ENCODE measurements at regions of chr2 and their contacts with region 1.

Region 1: DNA sequence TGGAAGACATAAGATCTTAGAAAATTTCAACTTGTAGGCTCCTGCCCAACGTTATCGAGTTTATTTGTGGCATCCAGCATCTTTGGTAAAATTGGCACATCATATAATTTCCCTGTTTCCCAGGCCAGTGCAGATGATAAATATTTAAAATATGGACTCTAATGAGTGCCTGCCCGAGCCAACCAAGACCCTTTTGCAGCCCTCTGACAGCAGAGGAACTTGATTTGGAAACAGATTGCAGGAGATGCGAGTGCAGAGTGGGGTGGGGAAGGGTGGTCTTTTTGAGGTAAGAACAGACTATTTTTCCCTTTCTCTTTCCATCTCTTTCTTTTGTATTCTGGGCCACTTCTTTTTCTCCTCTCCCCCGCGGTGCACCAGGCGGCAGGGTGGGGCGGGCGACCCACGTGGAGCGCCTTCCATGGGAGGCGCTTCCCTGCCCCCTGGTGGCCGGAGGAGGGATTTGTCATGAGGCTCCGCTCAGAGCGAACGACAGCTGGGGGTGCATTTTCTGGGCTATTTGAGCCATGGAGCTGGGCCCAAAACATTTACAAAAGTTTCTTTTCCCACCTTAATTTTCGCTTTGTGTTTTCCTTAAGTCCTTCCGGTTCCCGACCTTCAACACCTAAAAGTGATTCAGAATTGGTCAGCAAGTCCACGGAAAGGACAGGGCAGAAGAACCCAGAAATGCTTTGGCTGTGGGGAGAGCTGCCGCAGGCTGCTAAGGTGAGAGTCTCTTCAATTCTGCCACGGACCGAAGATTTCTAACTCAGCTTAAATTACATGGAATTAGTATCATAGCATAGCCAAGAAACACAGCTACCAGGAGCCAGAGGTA is 32.7 kb downstream of the LPIN1 start:
- DNase-seq: peak; percentile 93
- ATAC-seq: peak; percentile 92
- H3K4me3 Mint-ChIP-seq: peak overlapping the region; percentile 49
- H3K27ac Mint-ChIP-seq: peak overlapping the region; percentile 75
- H3K4me1 Mint-ChIP-seq: peaks cover 41% of the 10 kb centered on the region
- H3K27me3 Mint-ChIP-seq: no peaks in the 10 kb centered on the region

Region 2: DNA sequence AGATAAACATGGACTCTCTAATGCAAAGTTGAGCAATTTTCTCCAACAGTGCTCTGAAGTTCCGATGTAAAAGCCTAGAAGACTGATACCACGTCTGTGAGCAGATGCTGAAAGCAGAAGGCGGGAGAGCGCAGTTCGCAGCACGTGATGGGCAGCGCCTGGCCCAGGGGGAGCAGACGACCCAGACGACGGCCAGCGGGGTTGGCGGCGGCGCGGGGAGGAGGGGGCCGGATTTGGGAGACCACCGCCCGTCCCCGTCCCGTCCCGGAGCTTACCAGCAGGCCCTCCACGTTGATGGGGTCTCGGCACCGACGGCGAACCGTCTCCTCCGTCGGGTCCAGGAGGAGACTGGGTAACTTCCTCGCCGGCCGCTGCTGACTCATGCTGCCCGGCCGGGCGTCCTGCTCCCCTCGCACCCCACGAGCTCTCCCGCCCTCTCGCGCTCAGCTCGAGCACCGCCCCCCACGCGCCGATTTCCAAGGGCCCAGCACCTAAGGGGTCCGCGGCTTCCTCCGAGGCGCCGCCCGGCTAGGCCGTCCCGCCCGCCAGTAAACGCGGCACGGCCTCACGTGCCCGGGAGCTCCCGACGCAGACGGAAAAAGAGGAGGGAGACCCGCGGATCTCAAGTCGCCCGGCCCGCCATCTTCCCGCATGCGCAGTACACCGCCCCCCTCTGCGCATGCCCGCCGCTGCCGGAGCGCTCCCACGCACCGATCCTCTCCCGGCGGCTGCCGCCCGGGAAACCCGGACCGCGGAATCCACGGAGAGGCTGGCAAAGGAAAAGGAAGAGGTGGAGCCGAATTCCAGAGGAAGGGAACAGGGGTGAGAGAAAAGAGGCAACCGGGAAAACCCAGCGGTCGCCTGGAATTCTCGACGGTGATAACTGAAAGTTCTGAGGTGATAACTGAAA is 313.4 kb before region 1 on chr2 and contains the start of gene E2F6:
- CTCF ChIA-PET with region 1: no interaction called
- POLR2A ChIA-PET with region 1: interaction called, 6 read pairs
- intact Hi-C with region 1: loop called in 1 of 2 experiments (anchors 5 kb)
- DNase-seq: peak; percentile 92
- ATAC-seq: peak; percentile 85
- H3K4me3 Mint-ChIP-seq: peak within 1 kb of the TSS; percentile 81
- H3K27ac Mint-ChIP-seq: peak within 1 kb of the TSS; percentile 92
- H3K4me1 Mint-ChIP-seq: peaks cover 33% of the 10 kb centered on the region
- H3K27me3 Mint-ChIP-seq: no peaks in the 10 kb centered on the region
- total RNA-seq, gene E2F6: 7.2 to 10.6 TPM

Region 3: GRCh38 chr2:11738589-11739436 is 40.3 kb before region 1 on chr2:
- CTCF ChIA-PET with region 1: interaction called, 28 read pairs
- POLR2A ChIA-PET with region 1: interaction called, 3 read pairs
- intact Hi-C with region 1: loop called (anchors 1 to 2 kb)
- DNase-seq: peak; percentile 53
- ATAC-seq: peak; percentile 79
- H3K4me3 Mint-ChIP-seq: no peak overlapping the region
- H3K27ac Mint-ChIP-seq: no peak overlapping the region
- H3K4me1 Mint-ChIP-seq: peaks cover 11% of the 10 kb centered on the region
- H3K27me3 Mint-ChIP-seq: peaks cover 2% of the 10 kb centered on the region

Region 4: GRCh38 chr2:11753886-11754699 is 25.0 kb before region 1 on chr2:
- CTCF ChIA-PET with region 1: interaction called, 66 read pairs
- POLR2A ChIA-PET with region 1: interaction called, 3 read pairs
- intact Hi-C with region 1: loop called (anchors 1 kb)
- DNase-seq: peak; percentile 84
- ATAC-seq: peak; percentile 75
- H3K4me3 Mint-ChIP-seq: peak overlapping the region; percentile 75
- H3K27ac Mint-ChIP-seq: peak overlapping the region; percentile 98
- H3K4me1 Mint-ChIP-seq: peaks cover 91% of the 10 kb centered on the region
- H3K27me3 Mint-ChIP-seq: no peaks in the 10 kb centered on the region

Region 5: DNA sequence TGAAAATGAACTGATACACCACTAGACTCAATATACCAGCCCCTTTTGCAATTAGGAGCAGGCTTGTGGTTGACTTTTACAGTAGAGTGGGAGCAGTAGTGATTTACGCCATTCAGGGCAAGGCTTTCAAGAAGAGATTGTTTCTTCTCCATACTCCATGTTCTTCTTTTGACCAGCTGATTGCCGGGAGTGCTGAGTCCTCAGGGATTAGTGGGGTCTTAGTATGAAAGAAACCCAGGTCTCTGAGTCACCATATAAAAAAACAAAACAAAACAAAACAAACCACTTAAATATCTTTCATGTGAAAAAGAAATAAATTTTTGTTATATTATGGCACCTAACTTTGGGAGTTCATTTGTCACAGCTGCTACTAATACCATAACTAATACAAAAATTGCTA is 472.0 kb after region 1 on chr2:
- CTCF ChIA-PET with region 1: no interaction called
- POLR2A ChIA-PET with region 1: no interaction called
- intact Hi-C with region 1: no loop called
- DNase-seq: no peak
- ATAC-seq: no peak
- H3K4me3 Mint-ChIP-seq: no peak overlapping the region
- H3K27ac Mint-ChIP-seq: no peak overlapping the region
- H3K4me1 Mint-ChIP-seq: no peaks in the 10 kb centered on the region
- H3K27me3 Mint-ChIP-seq: no peaks in the 10 kb centered on the region

Measured in activated CD4-positive, alpha-beta T cell treated with anti-CD3 and anti-CD28 coated beads for 36 hours (primary cell).